Natural killer cell (primary cell): ENCODE measurements at regions of chr14 and their contacts with region 1.

Region 1: GRCh38 chr14:80996049-80996901 is 40.9 kb downstream of the TSHR start:
- DNase-seq: peak in 1 of 2 donors; percentile 66
- ATAC-seq: peak; percentile 60 to 76 (median 64)
- H3K4me3 ChIP-seq: no peak overlapping the region
- H3K4me3 Mint-ChIP-seq: no peak overlapping the region
- H3K27ac ChIP-seq: no peak overlapping the region
- H3K27ac Mint-ChIP-seq: no peak overlapping the region
- H3K4me1 ChIP-seq: no peaks in the 10 kb centered on the region
- H3K4me1 Mint-ChIP-seq: peaks cover 0 to 6% of the 10 kb centered on the region in 2 donors
- H3K27me3 ChIP-seq: peaks cover 17% of the 10 kb centered on the region
- H3K27me3 Mint-ChIP-seq: peaks cover 26 to 31% of the 10 kb centered on the region in 2 donors
- CTCF ChIP-seq: peak; percentile 47

Region 2: GRCh38 chr14:80681651-80682050 is 314.6 kb before region 1 on chr14:
- intact Hi-C with region 1: no loop called
- DNase-seq: no peak
- ATAC-seq: no peak
- H3K4me3 ChIP-seq: no peak overlapping the region
- H3K4me3 Mint-ChIP-seq: no peak overlapping the region
- H3K27ac ChIP-seq: no peak overlapping the region
- H3K27ac Mint-ChIP-seq: no peak overlapping the region
- H3K4me1 ChIP-seq: no peaks in the 10 kb centered on the region
- H3K4me1 Mint-ChIP-seq: no peaks in the 10 kb centered on the region
- H3K27me3 ChIP-seq: no peaks in the 10 kb centered on the region
- H3K27me3 Mint-ChIP-seq: no peaks in the 10 kb centered on the region
- CTCF ChIP-seq: no peak

Region 3: GRCh38 chr14:81170104-81170828 is 174.0 kb after region 1 on chr14:
- intact Hi-C with region 1: loop called (anchors 1 kb)
- DNase-seq: peak; percentile 85 to 92
- ATAC-seq: peak; percentile 97 to 99 (median 97)
- H3K4me3 ChIP-seq: peak overlapping the region; percentile 54
- H3K4me3 Mint-ChIP-seq: peak overlapping the region; percentile 91
- H3K27ac ChIP-seq: peak overlapping the region; percentile 76
- H3K27ac Mint-ChIP-seq: peak overlapping the region; percentile 91 to 96
- H3K4me1 ChIP-seq: peaks cover 8% of the 10 kb centered on the region
- H3K4me1 Mint-ChIP-seq: peaks cover 18 to 24% of the 10 kb centered on the region in 2 donors
- H3K27me3 ChIP-seq: no peaks in the 10 kb centered on the region
- H3K27me3 Mint-ChIP-seq: no peaks in the 10 kb centered on the region
- CTCF ChIP-seq: peak; percentile 83

Region 4: DNA sequence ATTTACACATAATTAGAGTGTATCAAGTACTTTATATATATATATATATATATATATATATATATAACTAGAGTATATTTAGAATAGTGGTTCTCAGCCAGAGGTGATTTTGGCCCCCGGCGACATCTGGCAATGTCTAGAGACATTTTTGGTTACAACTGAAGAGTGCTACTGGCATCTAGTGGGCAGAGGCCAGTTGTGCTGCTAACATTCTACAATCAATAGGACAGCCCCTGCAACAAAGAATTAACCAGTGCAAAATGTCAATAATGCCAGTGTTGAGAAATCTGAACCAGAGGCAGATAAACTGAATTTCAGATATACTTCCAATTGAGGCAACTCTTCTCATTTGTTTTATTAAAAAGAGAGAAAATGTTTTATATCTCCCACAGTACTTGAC is 215.6 kb after region 1 on chr14:
- intact Hi-C with region 1: loop called (anchors 1 kb)
- DNase-seq: peak in 1 of 2 donors; percentile 65
- ATAC-seq: peak; percentile 66 to 95 (median 83)
- H3K4me3 ChIP-seq: no peak overlapping the region
- H3K4me3 Mint-ChIP-seq: no peak overlapping the region
- H3K27ac ChIP-seq: no peak overlapping the region
- H3K27ac Mint-ChIP-seq: peak overlapping the region in 1 of 2 donors; percentile 50
- H3K4me1 ChIP-seq: no peaks in the 10 kb centered on the region
- H3K4me1 Mint-ChIP-seq: peaks cover 46 to 47% of the 10 kb centered on the region in 2 donors
- H3K27me3 ChIP-seq: no peaks in the 10 kb centered on the region
- H3K27me3 Mint-ChIP-seq: no peaks in the 10 kb centered on the region
- CTCF ChIP-seq: peak; percentile 54

Region 5: DNA sequence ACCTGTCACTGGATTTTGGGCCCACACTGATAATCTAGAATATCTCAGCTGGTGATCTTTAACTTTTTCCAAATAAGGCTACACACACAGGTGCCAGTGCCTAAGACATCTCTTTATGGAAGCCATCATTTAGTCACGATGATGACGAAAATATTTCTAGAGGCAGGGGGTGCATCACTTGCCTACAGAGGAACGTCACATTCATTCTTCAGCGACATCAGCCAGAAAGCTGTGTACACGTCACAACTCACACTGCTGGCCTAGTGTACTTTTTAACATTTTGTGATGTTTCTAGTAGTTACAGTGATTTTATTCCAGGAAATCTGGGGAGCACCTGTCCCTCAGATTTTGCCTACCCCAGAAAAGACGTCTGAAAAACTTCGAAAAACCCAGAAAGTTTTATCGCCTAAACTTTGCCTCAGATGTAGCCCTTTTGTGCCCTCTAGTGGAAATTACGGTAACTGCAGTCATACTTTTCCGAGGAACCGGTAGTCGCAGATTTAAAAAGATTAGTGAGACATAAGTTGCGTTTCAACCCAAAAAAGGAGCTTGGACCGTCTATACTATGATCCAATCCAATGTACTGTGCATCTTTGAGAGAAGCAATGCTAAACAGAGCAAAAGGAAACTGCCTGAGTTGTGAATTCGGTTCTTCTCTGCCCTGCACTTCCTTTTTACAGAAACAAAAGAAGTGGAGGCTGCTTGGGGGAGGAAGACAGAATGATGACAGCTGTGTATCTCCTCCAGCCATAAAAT is 468.1 kb after region 1 on chr14:
- intact Hi-C with region 1: loop called (anchors 2 kb)
- DNase-seq: peak in 1 of 2 donors; percentile 88
- ATAC-seq: peak; percentile 80 to 85 (median 84)
- H3K4me3 ChIP-seq: peak overlapping the region; percentile 79
- H3K4me3 Mint-ChIP-seq: peak overlapping the region; percentile 90
- H3K27ac ChIP-seq: peak overlapping the region; percentile 82
- H3K27ac Mint-ChIP-seq: peak overlapping the region; percentile 77 to 87
- H3K4me1 ChIP-seq: peaks cover 2% of the 10 kb centered on the region
- H3K4me1 Mint-ChIP-seq: peaks cover 0 to 7% of the 10 kb centered on the region in 2 donors
- H3K27me3 ChIP-seq: no peaks in the 10 kb centered on the region
- H3K27me3 Mint-ChIP-seq: no peaks in the 10 kb centered on the region
- CTCF ChIP-seq: peak; percentile 84

Region 6: GRCh38 chr14:81478446-81478845 is 482.2 kb after region 1 on chr14:
- intact Hi-C with region 1: no loop called
- DNase-seq: no peak
- ATAC-seq: no peak
- H3K4me3 ChIP-seq: no peak overlapping the region
- H3K4me3 Mint-ChIP-seq: no peak overlapping the region
- H3K27ac ChIP-seq: no peak overlapping the region
- H3K27ac Mint-ChIP-seq: no peak overlapping the region
- H3K4me1 ChIP-seq: peaks cover 7% of the 10 kb centered on the region
- H3K4me1 Mint-ChIP-seq: peaks cover 26 to 27% of the 10 kb centered on the region in 2 donors
- H3K27me3 ChIP-seq: no peaks in the 10 kb centered on the region
- H3K27me3 Mint-ChIP-seq: no peaks in the 10 kb centered on the region
- CTCF ChIP-seq: no peak